Activated CD4-positive, alpha-beta T cell treated with anti-CD3 and anti-CD28 coated beads for 36 hours (primary cell): ENCODE measurements at regions of chr7 and their contacts with region 1.

Region 1: DNA sequence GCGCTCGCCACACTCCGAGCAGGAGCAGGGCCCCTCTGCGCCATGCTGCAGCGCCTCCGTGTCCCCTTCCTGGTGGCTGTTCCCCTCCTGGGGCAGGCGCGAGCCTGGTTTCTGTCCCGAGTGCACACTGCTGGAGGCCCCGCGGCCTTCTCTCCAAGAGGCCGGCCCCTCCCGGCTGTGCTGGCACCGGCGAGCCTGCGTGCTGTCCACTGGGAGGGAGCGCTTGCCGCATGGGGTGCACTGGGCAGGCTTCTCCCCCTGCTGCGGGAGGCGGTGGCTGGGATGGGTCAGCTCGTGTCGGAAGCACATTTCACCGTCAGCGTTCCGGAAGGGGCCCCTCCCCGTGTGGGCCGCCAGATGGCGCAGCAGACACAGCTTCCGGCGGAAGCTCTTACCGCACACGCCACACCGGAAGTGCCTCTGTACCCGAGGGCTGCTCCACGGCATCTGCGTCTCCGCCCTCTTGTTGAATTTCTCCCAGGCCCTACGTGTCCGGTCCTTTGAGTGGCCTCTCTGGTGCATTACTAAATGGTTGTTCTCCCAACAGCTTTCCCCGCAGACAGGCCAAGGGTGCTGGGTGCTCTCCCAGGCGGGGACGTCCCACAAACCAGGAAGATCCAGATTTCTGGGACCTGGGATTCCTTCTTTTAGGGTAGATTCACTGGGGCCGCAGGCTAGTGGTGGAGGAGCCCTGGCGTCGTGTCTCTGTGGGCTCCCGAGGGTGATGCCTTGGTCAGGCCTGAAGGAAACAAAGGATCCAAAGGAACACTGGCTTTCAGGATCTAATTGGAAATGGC is 18.7 kb downstream of the ZNF786 start:
- DNase-seq: peak; percentile 70
- ATAC-seq: peak; percentile 84
- H3K4me3 Mint-ChIP-seq: peak overlapping the region; percentile 46
- H3K27ac Mint-ChIP-seq: peak overlapping the region; percentile 63
- H3K4me1 Mint-ChIP-seq: peaks cover 9% of the 10 kb centered on the region
- H3K27me3 Mint-ChIP-seq: no peaks in the 10 kb centered on the region

Region 2: DNA sequence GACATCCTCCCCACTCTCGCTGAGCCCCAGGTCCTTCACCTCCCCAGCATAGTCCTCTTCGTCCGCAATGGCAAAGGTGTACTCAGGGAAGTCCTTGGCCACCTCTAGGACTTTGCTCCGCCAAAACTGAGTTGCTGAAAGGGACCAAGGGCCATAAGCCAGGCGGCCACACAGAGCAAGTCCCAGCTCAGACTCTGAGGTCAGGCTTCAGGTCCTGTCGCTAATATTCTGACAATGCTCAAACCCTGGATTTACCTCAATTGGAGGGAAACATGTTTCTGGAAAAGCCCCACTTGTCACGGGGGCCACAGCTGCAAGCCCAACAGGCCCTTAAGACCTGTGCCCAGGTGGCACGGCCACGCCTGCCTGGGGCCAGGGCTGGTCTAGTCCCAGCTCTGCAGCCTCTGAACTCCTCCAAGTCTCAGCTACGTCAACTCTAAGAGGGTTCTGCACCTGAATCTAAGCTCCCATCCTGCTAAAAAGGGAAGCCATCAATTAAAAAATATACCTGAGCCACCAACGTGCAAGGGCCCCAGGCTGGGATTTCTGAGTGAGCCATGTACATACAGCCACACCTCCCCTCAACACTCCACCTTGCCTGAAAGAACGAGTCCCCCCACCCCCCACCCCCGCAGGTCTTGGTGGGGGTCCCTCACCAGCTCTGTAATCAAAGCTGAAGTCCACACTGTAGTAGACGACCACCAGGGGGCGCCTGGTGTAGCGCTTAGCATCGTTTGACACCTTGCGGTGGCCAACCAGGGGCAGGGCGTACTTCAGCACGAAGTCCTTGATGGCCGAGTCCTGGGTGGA is 66.4 kb before region 1 on chr7:
- CTCF ChIA-PET with region 1: interaction called, 59 read pairs
- POLR2A ChIA-PET with region 1: no interaction called
- intact Hi-C with region 1: no loop called
- DNase-seq: peak; percentile 90
- ATAC-seq: peak; percentile 90
- H3K4me3 Mint-ChIP-seq: no peak overlapping the region
- H3K27ac Mint-ChIP-seq: peak overlapping the region; percentile 8
- H3K4me1 Mint-ChIP-seq: peaks cover 2% of the 10 kb centered on the region
- H3K27me3 Mint-ChIP-seq: no peaks in the 10 kb centered on the region

Region 3: GRCh38 chr7:149261829-149262617 is 190.2 kb after region 1 on chr7 and contains the start of gene ZNF783:
- CTCF ChIA-PET with region 1: no interaction called
- POLR2A ChIA-PET with region 1: no interaction called
- intact Hi-C with region 1: no loop called
- DNase-seq: peak; percentile 92
- ATAC-seq: peak; percentile 84
- H3K4me3 Mint-ChIP-seq: peak within 1 kb of the TSS; percentile 74
- H3K27ac Mint-ChIP-seq: peak within 1 kb of the TSS; percentile 96
- H3K4me1 Mint-ChIP-seq: peaks cover 40% of the 10 kb centered on the region
- H3K27me3 Mint-ChIP-seq: no peaks in the 10 kb centered on the region
- total RNA-seq, gene ZNF783: 14.5 to 15.4 TPM

Region 4: DNA sequence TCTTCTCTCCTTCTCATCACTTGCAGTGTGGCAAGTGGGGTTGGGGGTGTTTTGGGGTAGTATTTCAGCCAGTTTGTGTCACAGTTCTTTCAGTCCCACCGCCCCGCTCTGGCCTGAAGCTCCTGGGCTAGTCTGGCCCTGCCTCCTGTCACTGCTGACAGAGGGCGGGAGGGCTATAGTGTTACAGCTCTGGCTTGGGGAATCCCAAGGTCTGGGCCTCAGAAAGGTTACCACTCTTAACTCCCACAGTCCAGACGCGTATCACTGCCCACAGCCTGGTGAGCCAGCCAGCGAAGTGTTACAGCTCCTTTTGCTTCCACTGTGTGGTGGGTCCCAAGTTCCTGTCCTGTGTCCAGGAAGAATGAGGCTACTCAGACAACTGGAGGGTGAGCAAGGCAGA is 333.0 kb after region 1 on chr7:
- CTCF ChIA-PET with region 1: no interaction called
- POLR2A ChIA-PET with region 1: no interaction called
- intact Hi-C with region 1: no loop called
- DNase-seq: no peak
- ATAC-seq: no peak
- H3K4me3 Mint-ChIP-seq: no peak overlapping the region
- H3K27ac Mint-ChIP-seq: no peak overlapping the region
- H3K4me1 Mint-ChIP-seq: no peaks in the 10 kb centered on the region
- H3K27me3 Mint-ChIP-seq: peaks cover 8% of the 10 kb centered on the region